ENCODE measurements at regions of chr14 and their contacts with region 1.

Region 1: GRCh38 chr14:89226801-89227495 is 190.1 kb downstream of the FOXN3 start:
- DNase-seq: no peak
- H3K4me3 ChIP-seq: peak overlapping the region in 1 of 2 donors; percentile 38
- H3K27ac ChIP-seq: peak overlapping the region; percentile 78 to 82
- H3K4me1 ChIP-seq: peaks cover 0 to 34% of the 10 kb centered on the region in 2 donors
- H3K27me3 ChIP-seq: no peaks in the 10 kb centered on the region
- CTCF ChIP-seq: no peak

Region 2: GRCh38 chr14:89107626-89108025 is 119.3 kb before region 1 on chr14:
- intact Hi-C with region 1: no loop called
- DNase-seq: no peak
- H3K4me3 ChIP-seq: no peak overlapping the region
- H3K27ac ChIP-seq: no peak overlapping the region
- H3K4me1 ChIP-seq: no peaks in the 10 kb centered on the region
- H3K27me3 ChIP-seq: no peaks in the 10 kb centered on the region
- CTCF ChIP-seq: no peak

Region 3: DNA sequence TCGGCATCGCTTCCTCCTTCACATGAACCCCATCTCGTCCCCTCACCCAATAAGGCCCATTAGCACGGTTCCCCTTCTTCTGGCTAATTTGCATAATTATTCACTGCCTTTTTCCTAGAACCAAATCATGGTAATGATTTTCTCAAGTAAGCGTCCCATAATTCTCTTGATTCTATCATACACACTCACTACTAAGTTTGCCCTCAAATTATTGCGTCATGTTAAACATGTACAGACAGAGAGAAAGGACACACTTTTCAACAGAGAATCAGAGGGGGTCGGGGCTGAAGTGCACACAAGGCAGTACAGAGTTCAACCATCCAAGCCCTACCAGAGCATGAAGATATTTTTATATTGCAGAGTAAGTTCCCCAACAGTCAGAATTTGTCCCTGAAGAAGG is 66.5 kb before region 1 on chr14:
- intact Hi-C with region 1: no loop called
- DNase-seq: no peak
- H3K4me3 ChIP-seq: no peak overlapping the region
- H3K27ac ChIP-seq: no peak overlapping the region
- H3K4me1 ChIP-seq: peaks cover 11 to 13% of the 10 kb centered on the region in 2 donors
- H3K27me3 ChIP-seq: no peaks in the 10 kb centered on the region
- CTCF ChIP-seq: no peak

Region 4: GRCh38 chr14:89185919-89186855 is 40.8 kb before region 1 on chr14:
- intact Hi-C with region 1: loop called (anchors 5 kb)
- DNase-seq: no peak
- H3K4me3 ChIP-seq: no peak overlapping the region
- H3K27ac ChIP-seq: peak overlapping the region; percentile 56 to 75
- H3K4me1 ChIP-seq: peaks cover 11 to 36% of the 10 kb centered on the region in 2 donors
- H3K27me3 ChIP-seq: no peaks in the 10 kb centered on the region
- CTCF ChIP-seq: peak in 1 of 3 experiments; percentile 15

Region 5: GRCh38 chr14:89485264-89485663 is 258.3 kb after region 1 on chr14:
- intact Hi-C with region 1: no loop called
- DNase-seq: no peak
- H3K4me3 ChIP-seq: no peak overlapping the region
- H3K27ac ChIP-seq: peak overlapping the region; percentile 6 to 20
- H3K4me1 ChIP-seq: peaks cover 0 to 8% of the 10 kb centered on the region in 2 donors
- H3K27me3 ChIP-seq: no peaks in the 10 kb centered on the region
- CTCF ChIP-seq: no peak

Region 6: GRCh38 chr14:89787525-89787924 is 560.6 kb after region 1 on chr14:
- intact Hi-C with region 1: no loop called
- DNase-seq: no peak
- H3K4me3 ChIP-seq: no peak overlapping the region
- H3K27ac ChIP-seq: no peak overlapping the region
- H3K4me1 ChIP-seq: no peaks in the 10 kb centered on the region
- H3K27me3 ChIP-seq: no peaks in the 10 kb centered on the region
- CTCF ChIP-seq: no peak